Activated T-helper 2 cell treated with anti-CD3 and anti-CD28 coated beads, Interferon-gamma antibody, Interleukin-2, Interleukin-4, amounts not matched to agents 10 μg/mL and 5 μg/mL and 100 μg/mL, durations not matched to agents 14 hours and 24 hours and 36 hours (primary cell): ENCODE measurements at regions of chr11 and their contacts with region 1.

Region 1: GRCh38 chr11:12043959-12044819 is 35.8 kb upstream of the DKK3 start:
- DNase-seq: peak; percentile 35
- H3K4me3 Mint-ChIP-seq: no peak overlapping the region
- H3K27ac Mint-ChIP-seq: no peak overlapping the region
- H3K4me1 Mint-ChIP-seq: peaks cover 18% of the 10 kb centered on the region
- H3K27me3 Mint-ChIP-seq: peaks cover 12% of the 10 kb centered on the region

Region 2: DNA sequence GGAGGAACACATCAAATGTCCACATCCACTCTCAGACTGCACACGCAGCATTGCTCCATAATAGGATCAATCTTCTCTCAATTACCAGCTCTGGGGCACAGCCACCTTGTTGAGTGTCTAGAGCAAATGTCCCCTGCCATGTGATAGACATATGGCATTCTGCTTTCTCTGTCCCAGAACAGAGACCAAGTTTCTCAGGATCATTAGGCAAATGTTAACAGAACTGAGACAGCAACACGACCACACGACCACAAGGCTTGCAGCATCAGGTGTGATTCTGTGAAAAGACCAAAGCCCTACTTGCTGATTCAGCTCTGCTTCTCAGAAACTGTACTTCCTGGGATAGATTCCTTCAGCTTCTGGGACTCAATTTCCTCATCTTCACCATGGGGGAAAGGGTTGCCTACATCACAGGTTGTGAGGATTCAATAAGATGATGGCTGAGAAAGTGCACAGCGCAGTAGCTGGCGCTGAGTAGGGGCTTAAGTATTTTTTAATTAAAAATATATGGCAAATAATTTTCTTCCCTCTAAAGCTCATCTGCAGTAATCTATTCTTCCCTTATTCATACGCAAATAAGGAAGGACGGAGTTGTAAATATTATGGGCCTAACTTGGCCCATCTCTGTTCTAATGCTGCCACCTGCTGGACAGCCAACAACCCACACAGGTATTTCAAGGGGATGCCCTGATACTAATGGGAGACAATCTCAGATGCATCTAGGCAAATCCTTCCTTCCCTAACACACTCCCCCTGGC is 256.7 kb before region 1 on chr11:
- intact Hi-C with region 1: loop called (anchors 5 kb)
- DNase-seq: peak; percentile 37
- H3K4me3 Mint-ChIP-seq: no peak overlapping the region
- H3K27ac Mint-ChIP-seq: no peak overlapping the region
- H3K4me1 Mint-ChIP-seq: no peaks in the 10 kb centered on the region
- H3K27me3 Mint-ChIP-seq: peaks cover 3% of the 10 kb centered on the region

Region 3: GRCh38 chr11:11931461-11932055 is 112.6 kb before region 1 on chr11:
- intact Hi-C with region 1: loop called (anchors 2 kb)
- DNase-seq: no peak
- H3K4me3 Mint-ChIP-seq: no peak overlapping the region
- H3K27ac Mint-ChIP-seq: no peak overlapping the region
- H3K4me1 Mint-ChIP-seq: peaks cover 6% of the 10 kb centered on the region
- H3K27me3 Mint-ChIP-seq: no peaks in the 10 kb centered on the region

Region 4: GRCh38 chr11:12159351-12160099 is 115.3 kb after region 1 on chr11:
- intact Hi-C with region 1: no loop called
- DNase-seq: no peak
- H3K4me3 Mint-ChIP-seq: peak overlapping the region; percentile 18
- H3K27ac Mint-ChIP-seq: peak overlapping the region; percentile 82
- H3K4me1 Mint-ChIP-seq: peaks cover 88% of the 10 kb centered on the region
- H3K27me3 Mint-ChIP-seq: no peaks in the 10 kb centered on the region

Region 5: DNA sequence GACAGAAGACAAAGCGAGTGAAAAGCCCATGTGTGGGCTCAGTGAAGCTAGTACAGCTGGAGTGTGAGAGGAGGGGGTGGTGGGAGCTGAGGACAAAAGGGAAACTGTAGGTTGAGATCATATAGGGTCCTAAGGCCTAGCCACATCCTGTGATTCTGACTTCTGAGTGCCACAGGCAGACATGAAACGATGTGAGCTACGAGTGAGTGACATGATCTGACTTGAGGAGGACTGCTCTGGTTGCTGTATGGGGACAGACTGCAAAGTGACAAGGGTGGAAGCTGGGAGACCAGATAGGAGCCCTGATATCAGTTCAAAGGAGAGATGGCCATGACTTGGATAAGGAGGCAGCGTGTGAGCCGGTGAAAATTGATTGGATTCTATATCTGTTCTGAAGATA is 151.6 kb after region 1 on chr11:
- intact Hi-C with region 1: loop called (anchors 2 kb)
- DNase-seq: peak; percentile 64
- H3K4me3 Mint-ChIP-seq: peak overlapping the region; percentile 99
- H3K27ac Mint-ChIP-seq: peak overlapping the region; percentile 98
- H3K4me1 Mint-ChIP-seq: peaks cover 66% of the 10 kb centered on the region
- H3K27me3 Mint-ChIP-seq: no peaks in the 10 kb centered on the region

Region 6: DNA sequence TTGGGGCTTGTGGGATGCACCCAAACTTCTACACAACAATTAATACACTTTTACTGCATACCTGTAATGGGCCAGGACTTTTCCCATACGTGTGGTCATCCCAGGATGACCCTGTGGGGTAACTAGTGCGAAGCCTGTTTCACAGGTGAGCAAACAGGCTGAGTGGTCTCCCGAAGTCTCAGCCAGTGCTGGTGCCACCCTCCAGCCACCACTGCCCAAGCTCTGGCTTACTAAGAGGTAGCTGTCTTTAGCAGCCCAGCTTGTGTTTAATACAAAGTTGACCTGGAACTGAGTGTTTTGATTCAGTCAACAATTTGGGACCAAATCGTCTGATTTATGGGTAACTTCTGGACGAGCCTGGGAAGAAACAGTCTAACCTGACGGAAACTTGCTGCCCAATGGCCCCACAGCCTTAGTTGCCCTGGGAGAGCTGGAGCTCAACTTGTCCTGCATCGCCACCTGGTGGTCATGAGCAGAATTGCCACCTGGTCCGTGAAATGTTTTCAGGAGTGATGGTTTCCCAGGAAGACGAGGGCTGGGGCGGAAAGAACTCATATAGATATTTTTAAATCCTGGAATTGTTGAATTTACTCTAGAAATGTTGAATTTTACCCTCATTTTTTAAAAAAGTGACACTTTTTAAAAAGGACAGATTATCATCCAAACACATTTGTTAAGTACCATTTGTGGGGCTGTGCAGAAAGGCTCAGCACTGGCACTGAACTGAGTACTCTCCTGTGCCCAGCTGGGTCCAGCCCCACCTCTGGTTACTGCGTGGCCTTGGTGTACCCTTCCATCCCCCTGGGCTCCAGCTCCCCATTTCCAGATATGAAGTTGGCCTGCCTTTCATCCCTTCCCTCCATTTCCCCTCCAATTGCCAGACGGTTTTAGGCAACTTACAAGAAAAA is 237.6 kb after region 1 on chr11:
- intact Hi-C with region 1: loop called (anchors 1 kb)
- DNase-seq: peak; percentile 60
- H3K4me3 Mint-ChIP-seq: no peak overlapping the region
- H3K27ac Mint-ChIP-seq: peak overlapping the region; percentile 74
- H3K4me1 Mint-ChIP-seq: peaks cover 20% of the 10 kb centered on the region
- H3K27me3 Mint-ChIP-seq: no peaks in the 10 kb centered on the region

Region 7: GRCh38 chr11:12888525-12889158 is 844.5 kb after region 1 on chr11:
- intact Hi-C with region 1: loop called (anchors 2 kb)
- DNase-seq: peak; percentile 33
- H3K4me3 Mint-ChIP-seq: no peak overlapping the region
- H3K27ac Mint-ChIP-seq: no peak overlapping the region
- H3K4me1 Mint-ChIP-seq: no peaks in the 10 kb centered on the region
- H3K27me3 Mint-ChIP-seq: peaks cover 8% of the 10 kb centered on the region